Sciatic nerve (tissue), 2 donors: ENCODE measurements at regions of chr4 and their contacts with region 1.

Region 1: DNA sequence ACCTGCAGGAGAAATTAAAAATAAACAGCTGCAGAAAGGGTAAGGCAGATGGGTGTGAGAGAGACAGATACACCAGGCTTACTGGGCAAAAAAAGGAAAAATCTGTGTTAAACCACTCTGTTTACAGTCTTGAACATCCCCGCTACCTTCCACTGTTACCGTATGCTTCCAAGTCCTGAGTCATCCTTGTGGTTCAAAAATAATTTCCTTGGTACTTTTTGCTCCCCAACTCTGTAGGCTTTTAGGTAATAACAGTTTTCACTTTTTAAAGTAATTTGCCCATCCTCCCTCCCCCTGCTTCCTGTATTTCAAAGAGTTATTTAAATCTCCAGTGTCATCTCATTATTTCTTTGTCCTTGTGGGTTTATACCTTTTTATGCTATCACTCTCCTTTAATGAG is 210.1 kb upstream of the FAT4 start:
- DNase-seq: no peak
- ATAC-seq: no peak

Region 2: DNA sequence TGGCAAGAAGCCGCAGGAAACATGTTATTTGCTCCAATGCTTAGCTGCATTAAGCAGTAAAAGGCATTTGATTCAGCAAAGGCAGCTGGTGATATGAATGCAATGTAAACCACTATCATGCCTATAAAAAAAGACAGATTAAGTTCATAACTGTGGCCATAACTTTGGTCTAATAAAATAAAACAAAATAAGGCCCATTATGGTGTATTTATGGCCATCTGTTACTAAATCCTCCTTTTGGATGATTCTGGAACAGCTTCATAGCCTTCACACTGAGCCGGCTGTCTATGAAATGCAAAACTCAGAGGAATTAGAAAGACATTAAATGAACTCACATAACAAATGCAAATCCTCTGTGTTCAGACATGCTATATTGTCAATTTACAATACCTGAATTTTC is 13.5 kb before region 1 on chr4:
- intact Hi-C with region 1: no loop called
- DNase-seq: no peak
- ATAC-seq: no peak

Region 3: GRCh38 chr4:125140966-125141495 is 36.4 kb after region 1 on chr4:
- intact Hi-C with region 1: loop called (anchors 5 kb)
- DNase-seq: no peak
- ATAC-seq: no peak

Region 4: GRCh38 chr4:125159001-125159400 is 54.4 kb after region 1 on chr4:
- intact Hi-C with region 1: no loop called
- DNase-seq: no peak
- ATAC-seq: no peak

Region 5: DNA sequence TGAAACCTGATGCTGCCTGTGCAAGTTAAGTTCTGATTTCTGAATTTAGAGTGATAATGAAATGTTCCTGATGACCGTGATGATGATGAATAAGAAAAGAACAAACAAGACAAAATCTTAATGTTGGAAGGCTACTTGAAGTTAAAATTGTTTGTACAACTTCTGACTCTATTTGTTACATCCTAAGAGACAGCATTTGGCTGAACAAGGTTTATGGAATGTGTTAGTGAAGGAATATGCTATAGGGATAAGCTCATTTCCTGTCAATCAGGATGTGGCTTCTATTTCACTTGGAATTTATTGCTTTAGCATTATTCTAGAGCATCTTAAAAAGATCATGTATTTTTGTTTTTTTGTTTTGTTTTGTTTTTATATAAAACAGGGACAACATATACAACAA is 477.7 kb after region 1 on chr4:
- intact Hi-C with region 1: no loop called
- DNase-seq: no peak
- ATAC-seq: no peak